Mammary epithelial cell (primary cell): ENCODE measurements at regions of chr10 and their contacts with region 1.

Region 1: DNA sequence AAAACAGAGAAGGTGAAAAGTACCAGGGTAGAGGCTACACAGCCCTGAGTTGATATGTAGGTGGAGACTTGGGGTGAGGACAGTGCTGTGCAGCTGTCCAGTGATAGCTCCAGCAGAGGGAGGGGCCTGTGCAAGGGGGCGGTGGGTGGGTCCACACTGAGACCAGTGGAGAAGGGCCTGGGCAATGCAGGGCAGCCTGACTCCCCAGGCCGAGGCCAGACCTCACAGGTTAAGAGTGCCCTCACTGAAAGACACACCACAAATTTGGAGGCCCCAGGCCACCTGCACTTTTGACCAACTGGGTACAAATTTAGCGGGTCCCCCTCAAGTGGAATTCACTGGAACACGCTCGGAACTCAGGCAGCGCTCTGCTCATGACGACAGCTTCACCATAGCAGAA is 6.7 kb upstream of the RASGEF1A start:
- DNase-seq: no peak
- H3K4me3 ChIP-seq: no peak overlapping the region
- H3K27ac ChIP-seq: no peak overlapping the region
- H3K4me1 ChIP-seq: peaks cover 3% of the 10 kb centered on the region
- H3K27me3 ChIP-seq: no peaks in the 10 kb centered on the region
- CTCF ChIP-seq: no peak

Region 2: DNA sequence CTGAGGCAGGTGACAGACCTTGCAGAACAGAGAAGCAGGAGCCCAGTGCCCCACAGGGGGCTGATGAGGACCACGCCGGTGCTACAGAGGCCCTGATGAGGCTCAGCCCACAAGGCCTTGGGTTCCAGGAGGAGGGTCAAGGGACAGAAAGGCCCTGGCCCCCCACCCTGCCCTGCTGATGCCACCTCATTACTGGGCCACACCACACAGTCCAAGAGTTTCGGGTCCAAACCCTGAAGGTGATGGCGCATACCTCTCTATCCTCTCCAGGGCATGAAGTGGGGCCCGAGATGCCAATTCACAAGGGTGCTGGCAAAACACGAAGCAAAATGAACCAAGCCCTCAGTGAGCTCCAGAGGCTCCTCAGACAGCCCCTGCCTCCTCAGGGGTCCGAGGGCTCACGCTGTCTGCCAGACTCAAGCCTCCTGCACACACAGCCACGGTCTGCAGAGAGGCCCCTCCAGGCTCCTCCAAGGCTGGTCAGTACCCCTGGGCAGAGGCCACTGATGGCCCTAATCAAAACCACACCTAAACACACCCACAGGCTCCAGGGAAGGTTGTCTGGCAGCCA is 39.0 kb before region 1 on chr10:
- CTCF ChIA-PET with region 1: no interaction called
- dilution Hi-C with region 1: loop called (anchors 5 kb)
- in situ Hi-C with region 1: no loop called
- intact Hi-C with region 1: no loop called
- DNase-seq: no peak
- H3K4me3 ChIP-seq: no peak overlapping the region
- H3K27ac ChIP-seq: no peak overlapping the region
- H3K4me1 ChIP-seq: peaks cover 4% of the 10 kb centered on the region
- H3K27me3 ChIP-seq: peaks cover 8% of the 10 kb centered on the region
- CTCF ChIP-seq: no peak

Region 3: DNA sequence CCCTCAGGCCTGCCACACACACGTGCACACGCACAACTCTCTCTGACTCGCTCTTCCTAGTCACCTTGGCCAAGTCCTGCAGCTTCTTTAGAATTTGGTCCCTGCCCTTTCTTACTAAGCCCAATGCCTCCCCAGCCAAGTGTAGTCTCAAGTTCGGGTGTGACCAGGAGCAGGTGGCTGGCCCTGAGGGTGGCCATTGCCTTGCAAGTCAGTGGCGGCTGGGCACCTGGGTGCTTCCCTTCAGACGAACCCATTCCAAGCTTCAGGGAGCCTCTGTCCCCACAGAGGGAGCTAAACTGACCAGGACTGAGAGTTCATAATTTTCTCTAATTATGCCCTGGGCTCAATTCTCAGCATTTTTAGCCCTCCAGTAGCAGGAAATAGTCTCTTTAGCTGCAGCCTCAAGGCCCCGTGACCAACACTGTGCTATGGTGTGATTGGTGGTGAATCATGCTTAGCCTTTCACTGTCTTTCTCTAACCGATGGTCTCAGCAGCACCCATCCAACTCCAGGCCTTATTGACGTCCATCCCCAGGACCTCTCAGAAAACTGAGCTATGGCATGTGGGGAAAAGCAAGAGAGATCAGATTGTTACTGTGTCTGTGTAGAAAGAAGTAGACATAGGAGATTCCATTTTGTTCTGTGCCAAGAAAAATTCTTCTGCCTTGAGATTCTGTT is 63.2 kb after region 1 on chr10:
- CTCF ChIA-PET with region 1: no interaction called
- dilution Hi-C with region 1: loop called (anchors 5 kb)
- in situ Hi-C with region 1: no loop called
- intact Hi-C with region 1: no loop called
- DNase-seq: no peak
- H3K4me3 ChIP-seq: no peak overlapping the region
- H3K27ac ChIP-seq: no peak overlapping the region
- H3K4me1 ChIP-seq: peaks cover 9% of the 10 kb centered on the region
- H3K27me3 ChIP-seq: peaks cover 5% of the 10 kb centered on the region
- CTCF ChIP-seq: no peak

Region 4: GRCh38 chr10:43361986-43362839 is 88.7 kb after region 1 on chr10:
- CTCF ChIA-PET with region 1: no interaction called
- dilution Hi-C with region 1: loop called (anchors 5 kb)
- in situ Hi-C with region 1: no loop called
- intact Hi-C with region 1: no loop called
- DNase-seq: peak; percentile 81
- H3K4me3 ChIP-seq: peak overlapping the region; percentile 47 to 55 (median 54)
- H3K27ac ChIP-seq: peak overlapping the region; percentile 18
- H3K4me1 ChIP-seq: peaks cover 5% of the 10 kb centered on the region
- H3K27me3 ChIP-seq: no peaks in the 10 kb centered on the region
- CTCF ChIP-seq: peak; percentile 19 to 54

Region 5: GRCh38 chr10:43380610-43381222 is 107.2 kb after region 1 on chr10:
- CTCF ChIA-PET with region 1: no interaction called
- dilution Hi-C with region 1: no loop called
- in situ Hi-C with region 1: no loop called
- intact Hi-C with region 1: no loop called
- DNase-seq: no peak
- H3K4me3 ChIP-seq: no peak overlapping the region
- H3K27ac ChIP-seq: no peak overlapping the region
- H3K4me1 ChIP-seq: peaks cover 7% of the 10 kb centered on the region
- H3K27me3 ChIP-seq: no peaks in the 10 kb centered on the region
- CTCF ChIP-seq: peak; percentile 19 to 27